Stomach (tissue), 19 donors: ENCODE measurements at regions of chr17 and their contacts with region 1.

Region 1: DNA sequence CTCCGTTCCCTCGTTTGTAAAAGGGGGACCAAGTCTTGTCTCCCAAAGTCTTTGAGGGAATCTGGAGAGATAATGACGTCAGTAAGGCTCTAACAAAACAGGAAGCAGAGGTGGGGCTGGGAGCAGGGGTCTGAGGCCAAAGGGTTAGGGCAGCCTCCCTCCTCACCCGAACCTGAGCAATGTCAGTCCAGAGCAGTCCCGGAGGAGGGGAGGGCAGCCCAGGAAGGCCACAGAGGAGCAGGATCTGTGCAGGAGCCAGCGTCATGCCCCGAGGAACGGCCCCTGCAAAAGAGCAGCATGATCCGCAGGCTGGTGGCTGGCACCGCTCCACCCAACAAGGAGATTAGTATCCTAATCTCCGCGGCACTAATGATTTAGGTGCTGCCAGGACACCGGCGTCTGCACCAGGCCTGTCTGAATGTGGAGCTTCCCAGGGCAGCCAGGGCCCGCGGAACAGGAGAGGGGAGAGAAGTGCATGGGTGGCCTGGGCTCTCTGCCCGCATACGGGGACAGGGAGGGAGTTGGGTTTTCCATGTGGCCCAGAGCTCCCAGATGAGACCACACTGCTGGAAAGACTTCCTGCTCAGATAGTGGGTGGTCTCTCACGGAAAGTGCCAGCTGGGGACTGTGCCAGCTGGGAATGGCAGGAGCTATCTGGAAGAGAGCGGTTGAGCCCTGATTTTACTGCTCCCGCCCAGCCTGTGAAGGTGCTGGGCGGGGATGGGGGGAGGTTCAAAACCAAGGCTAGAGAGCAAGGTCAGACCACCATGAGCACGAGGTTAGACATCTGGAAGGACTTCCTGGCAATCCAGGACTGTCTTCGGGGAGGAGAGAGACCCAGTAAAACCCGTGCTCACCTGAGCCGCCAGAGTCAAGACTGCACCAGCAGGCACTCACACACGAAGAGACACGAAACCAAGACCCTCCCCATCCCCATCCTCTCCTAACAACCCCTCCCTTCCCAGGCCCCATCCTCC is 11.0 kb upstream of the KRT17 start:
- DNase-seq: peak; percentile 75 to 84
- H3K4me3 ChIP-seq: peak overlapping the region in 1 of 4 donors; percentile 22
- H3K27ac ChIP-seq: no peak overlapping the region
- H3K4me1 ChIP-seq: peaks cover 8 to 20% (median 15%) of the 10 kb centered on the region in 4 donors
- H3K27me3 ChIP-seq: peaks cover 0 to 14% (median 0%) of the 10 kb centered on the region in 3 donors
- CTCF ChIP-seq: no peak
- EP300 ChIP-seq: no peak
- POLR2A ChIP-seq: no peak

Region 2: DNA sequence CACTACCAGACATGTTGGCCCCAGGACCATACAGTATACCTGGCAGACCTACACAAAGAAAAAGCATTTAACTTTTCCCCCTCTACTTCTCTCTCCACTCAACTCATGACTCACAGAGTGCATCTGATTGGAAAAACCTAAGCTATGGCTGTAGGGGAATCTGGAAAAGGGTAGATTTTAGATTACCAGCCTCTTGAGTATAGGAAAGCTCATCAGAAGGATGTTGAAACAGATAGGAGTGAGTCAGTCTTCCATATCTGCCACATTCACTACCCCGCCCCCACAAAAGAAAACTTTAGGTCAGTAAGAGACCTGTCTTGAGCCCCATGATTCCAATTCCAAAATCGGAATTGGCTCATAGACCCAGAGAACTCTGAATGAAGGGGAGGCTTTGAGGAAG is 75.9 kb before region 1 on chr17:
- intact Hi-C with region 1: loop called (anchors 5 kb)
- DNase-seq: no peak
- H3K4me3 ChIP-seq: no peak overlapping the region
- H3K27ac ChIP-seq: no peak overlapping the region
- H3K4me1 ChIP-seq: peaks cover 0 to 4% (median 0%) of the 10 kb centered on the region in 4 donors
- H3K27me3 ChIP-seq: peaks cover 0 to 58% (median 7%) of the 10 kb centered on the region in 3 donors
- CTCF ChIP-seq: no peak
- EP300 ChIP-seq: no peak
- POLR2A ChIP-seq: no peak